Sigmoid colon (tissue), 7 donors: ENCODE measurements at regions of chr11 and their contacts with region 1.

Region 1: DNA sequence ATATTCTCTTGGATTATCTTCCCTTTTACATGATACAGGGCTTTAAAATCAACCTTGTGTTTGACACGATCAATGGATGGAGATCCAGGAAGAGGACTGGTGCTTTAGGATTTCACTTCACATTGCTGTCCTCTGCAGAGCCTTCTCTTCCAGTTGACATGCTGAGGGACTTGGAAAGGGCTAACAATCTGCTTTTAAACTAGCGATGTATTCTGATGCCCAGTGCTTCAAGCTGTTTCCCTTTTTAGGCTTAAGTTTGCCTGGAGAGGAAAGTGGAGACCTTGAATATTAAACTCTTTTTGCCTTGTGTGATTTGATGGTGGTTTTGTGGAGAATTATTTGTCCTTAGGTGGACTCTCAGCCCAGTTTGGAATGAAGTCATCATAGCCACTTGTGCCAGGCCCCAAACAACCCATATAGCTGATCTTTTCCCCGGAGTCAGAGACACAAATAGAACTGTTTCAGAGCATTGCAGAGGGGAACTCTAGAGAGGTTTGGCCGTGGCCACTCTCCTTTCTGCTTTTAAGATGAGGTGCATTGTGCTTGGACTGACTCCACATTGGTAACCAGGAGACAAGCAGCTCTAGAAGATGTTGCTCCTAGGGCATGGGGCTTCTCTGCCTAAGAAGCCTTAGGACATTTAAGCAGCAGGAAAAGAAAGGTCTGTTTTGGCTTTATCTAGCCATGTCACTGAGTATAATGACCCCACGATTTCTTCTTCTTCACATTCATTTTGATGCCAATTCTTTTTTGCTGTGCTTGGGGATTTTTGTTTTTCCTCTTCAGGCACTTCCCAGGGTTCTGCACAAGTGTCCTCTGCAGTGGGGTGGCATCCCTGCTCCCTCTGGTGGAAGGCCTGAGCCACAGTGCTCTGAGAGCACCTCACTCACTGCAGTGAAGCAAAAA is 152.8 kb downstream of the NCAM1 start:
- DNase-seq: peak; percentile 71
- H3K4me3 ChIP-seq: no peak overlapping the region
- H3K27ac ChIP-seq: peak overlapping the region in 3 of 4 donors; percentile 19 to 47 (median 43)
- H3K4me1 ChIP-seq: peaks cover 0 to 26% (median 21%) of the 10 kb centered on the region in 4 donors
- H3K27me3 ChIP-seq: no peaks in the 10 kb centered on the region
- CTCF ChIP-seq: peak; percentile 24 to 77 (median 70)
- EP300 ChIP-seq: no peak
- POLR2A ChIP-seq: no peak

Region 2: GRCh38 chr11:112795142-112795815 is 318.8 kb before region 1 on chr11:
- intact Hi-C with region 1: loop called (anchors 5 kb)
- DNase-seq: no peak
- H3K4me3 ChIP-seq: no peak overlapping the region
- H3K27ac ChIP-seq: peak overlapping the region; percentile 67 to 75 (median 67)
- H3K4me1 ChIP-seq: peaks cover 0 to 44% (median 35%) of the 10 kb centered on the region in 4 donors
- H3K27me3 ChIP-seq: no peaks in the 10 kb centered on the region
- CTCF ChIP-seq: peak in 3 of 4 experiments; percentile 46 to 65 (median 57)
- EP300 ChIP-seq: no peak
- POLR2A ChIP-seq: no peak

Region 3: GRCh38 chr11:113014262-113015097 is 99.6 kb before region 1 on chr11:
- intact Hi-C with region 1: no loop called
- DNase-seq: peak; percentile 89
- H3K4me3 ChIP-seq: no peak overlapping the region
- H3K27ac ChIP-seq: peak overlapping the region in 3 of 4 donors; percentile 62 to 73 (median 69)
- H3K4me1 ChIP-seq: peaks cover 2 to 20% (median 18%) of the 10 kb centered on the region in 4 donors
- H3K27me3 ChIP-seq: no peaks in the 10 kb centered on the region
- CTCF ChIP-seq: no peak
- EP300 ChIP-seq: no peak
- POLR2A ChIP-seq: no peak